ENCODE measurements at regions of chr5 and their contacts with region 1.

Region 1: DNA sequence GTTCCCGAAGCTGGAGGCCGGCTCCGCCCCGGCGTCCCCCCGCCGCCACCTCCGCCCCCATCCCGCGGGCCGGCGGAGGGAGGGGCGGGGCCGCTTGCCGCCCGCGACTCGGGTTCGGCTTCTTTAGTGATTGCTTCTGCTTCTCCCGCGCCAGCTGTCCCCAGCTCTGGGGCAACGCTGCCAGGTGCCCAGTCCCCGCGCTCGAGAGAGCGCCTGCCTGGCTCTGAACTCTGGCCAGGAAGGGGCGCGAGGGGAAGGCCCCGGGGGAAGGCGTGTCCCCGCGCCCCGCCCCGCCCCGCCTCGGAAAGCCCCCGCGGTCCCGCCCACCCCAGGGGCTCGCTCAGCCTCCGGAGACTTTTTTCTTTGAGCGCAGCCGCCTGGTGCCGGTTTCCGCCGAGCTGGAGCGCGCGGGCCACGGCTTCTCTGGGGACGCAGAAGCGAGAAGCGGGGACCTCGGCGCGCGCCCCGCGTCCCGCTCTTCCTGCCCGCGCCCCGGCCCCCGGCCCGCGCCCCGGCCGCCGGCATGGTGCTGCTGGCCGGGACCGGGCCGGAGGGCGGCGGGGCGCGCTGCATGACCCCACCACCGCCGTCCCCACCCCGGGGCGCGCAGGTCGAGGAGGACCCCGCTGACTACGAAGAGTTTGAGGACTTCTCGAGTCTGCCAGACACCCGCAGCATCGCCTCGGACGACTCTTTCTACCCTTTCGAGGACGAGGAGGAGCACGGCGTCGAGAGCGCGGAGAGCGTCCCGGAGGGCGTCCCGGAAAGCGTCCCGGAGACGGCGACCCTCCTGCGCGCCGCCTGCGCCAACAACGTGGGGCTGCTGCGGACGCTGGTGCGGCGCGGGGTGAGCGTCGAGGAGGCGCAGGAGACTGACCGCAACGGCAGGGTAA is at the start of gene ANKRD33B:
- DNase-seq: peak; percentile 86
- ATAC-seq: peak; percentile 67
- total RNA-seq, gene ANKRD33B: 4.1 TPM

Region 2: GRCh38 chr5:10460252-10460906 is 103.8 kb before region 1 on chr5:
- intact Hi-C with region 1: loop called (anchors 5 kb)
- DNase-seq: peak; percentile 91
- ATAC-seq: peak; percentile 86

Region 3: DNA sequence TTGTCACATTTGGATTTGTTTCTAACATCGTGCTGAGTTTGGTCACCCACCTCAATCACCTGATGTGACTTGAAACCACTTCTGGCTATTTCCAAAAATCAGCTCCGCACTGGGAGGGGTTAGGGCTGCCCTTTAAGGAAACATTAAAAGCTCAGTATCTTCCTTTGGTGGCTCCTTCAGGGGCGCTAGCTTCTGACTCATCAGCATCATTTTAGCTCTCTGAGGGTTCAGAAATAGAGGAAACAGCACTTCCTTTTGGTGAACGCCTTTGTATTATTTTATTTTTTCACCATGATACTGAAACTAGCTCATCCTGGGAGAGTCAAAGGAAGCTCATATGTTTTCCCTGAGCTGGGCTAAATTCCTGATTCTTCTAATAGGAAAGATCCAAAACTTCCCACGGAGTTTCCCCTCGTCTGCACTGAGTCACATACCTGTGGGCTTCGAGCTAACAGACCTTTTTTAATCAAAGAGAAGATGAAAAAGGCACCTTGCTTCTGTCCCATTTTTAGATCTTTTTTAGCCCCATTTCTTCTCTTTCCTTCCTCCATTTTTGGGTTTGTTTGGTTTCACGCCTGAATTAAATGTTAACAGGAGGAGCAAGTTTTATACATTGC is 74.3 kb before region 1 on chr5:
- intact Hi-C with region 1: loop called (anchors 5 kb)
- DNase-seq: no peak
- ATAC-seq: no peak

Region 4: GRCh38 chr5:10513501-10514442 is 50.4 kb before region 1 on chr5:
- intact Hi-C with region 1: no loop called
- DNase-seq: no peak
- ATAC-seq: no peak

Region 5: GRCh38 chr5:10595678-10596309 is 31.6 kb after region 1 on chr5:
- intact Hi-C with region 1: loop called (anchors 5 kb)
- DNase-seq: no peak
- ATAC-seq: peak; percentile 90

Region 6: DNA sequence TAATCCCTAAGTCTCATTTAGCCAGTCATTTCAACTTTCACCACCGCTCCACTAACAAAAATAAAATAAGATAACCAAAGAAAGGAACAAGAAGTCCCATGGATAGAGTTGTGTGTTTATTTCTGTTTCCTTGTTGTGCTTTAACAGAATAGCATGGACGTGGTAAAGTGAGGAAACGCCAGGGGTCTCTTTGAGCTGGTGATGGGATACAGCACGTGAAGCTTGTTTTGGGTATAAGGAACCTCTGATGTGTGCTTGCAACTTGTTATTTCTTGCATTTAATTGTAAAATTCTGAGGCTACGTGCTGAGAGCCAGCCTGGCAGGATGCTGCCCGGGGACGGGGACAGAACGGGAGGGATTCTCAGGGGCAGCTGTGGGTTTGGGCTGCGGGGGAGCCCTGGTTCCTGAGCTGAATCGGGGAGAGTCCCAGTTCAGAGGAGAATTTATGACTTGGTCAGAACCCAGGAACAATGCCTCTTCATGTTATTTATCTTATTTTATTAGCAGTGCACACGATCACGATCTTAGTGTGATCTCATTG is 63.0 kb after region 1 on chr5:
- intact Hi-C with region 1: loop called (anchors 5 kb)
- DNase-seq: no peak
- ATAC-seq: peak; percentile 2

Measured in Right ventricle myocardium inferior (tissue), 1 donor.